ENCODE measurements at regions of chr2 and their contacts with region 1.

Region 1: DNA sequence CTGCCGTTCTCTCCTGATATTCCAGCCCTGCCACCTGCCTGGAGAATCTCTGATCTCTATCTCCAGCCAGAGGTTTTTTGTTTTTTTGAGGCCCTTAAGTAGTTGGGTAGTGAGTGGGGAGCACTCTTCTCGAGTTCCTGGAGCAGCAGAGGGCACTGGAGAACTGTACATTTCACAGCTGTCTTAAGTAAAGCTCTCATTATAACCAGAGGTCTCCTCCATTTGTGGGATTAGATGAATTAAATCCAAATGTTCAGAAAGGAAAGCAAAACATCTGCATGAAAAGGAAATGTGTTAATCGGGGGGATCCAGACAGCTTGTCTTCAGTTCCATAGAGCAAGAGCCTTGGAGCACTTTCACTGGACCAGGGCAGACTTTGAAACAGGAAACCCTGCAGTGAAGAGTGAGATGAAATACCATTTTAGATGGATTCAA is 32.8 kb downstream of the AOX1 start:
- DNase-seq: peak; percentile 78
- ATAC-seq: peak; percentile 73
- H3K4me3 ChIP-seq: no peak overlapping the region
- H3K27ac ChIP-seq: no peak overlapping the region; the same call in 1 of the 2 replicates
- H3K4me1 ChIP-seq: peaks cover 20% of the 10 kb centered on the region
- H3K27me3 ChIP-seq: no peaks in the 10 kb centered on the region
- CTCF ChIP-seq: peak; percentile 53
- POLR2A ChIP-seq: no peak
- RAD21 ChIP-seq: peak; percentile 53

Region 2: DNA sequence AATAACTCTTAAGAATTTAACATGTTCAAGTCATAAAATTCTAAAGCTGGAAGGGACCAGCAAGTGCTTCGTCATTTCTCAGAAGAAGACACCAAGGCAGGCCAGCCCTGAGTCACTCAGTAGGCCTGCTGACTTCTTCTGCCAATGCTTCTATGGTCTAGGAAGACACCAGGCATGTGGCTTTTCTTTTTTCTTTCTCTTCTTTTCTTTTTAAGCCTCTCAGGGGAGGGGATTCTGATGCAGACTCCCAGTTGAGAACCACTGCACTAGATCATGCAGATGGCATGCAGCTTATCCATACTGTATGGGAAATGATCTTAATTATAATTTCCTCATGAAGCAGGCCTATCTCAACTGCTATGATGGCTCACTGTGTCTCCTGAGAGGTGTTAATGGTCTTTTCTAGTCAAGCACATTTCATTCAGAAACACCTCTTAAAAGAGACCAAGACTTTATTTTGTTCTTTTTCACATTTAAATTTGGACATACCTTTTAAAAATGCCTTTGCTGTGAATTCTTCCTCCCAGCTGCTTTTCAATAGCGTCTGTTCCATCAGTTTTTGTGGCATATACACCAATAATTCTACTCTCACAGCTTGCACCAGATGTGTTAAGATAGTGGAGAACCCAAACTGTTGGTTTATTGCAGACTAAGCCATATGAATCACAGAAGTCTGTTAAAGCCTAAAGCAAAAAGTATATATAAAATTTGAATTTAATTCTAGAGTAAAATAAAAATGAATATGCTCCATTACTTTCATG is 120.0 kb before region 1 on chr2:
- CTCF ChIA-PET with region 1: no interaction called
- POLR2A ChIA-PET with region 1: no interaction called
- dilution Hi-C with region 1: no loop called
- in situ Hi-C with region 1: no loop called
- intact Hi-C with region 1: no loop called
- DNase-seq: no peak
- ATAC-seq: no peak
- H3K4me3 ChIP-seq: no peak overlapping the region
- H3K27ac ChIP-seq: no peak overlapping the region
- H3K4me1 ChIP-seq: no peaks in the 10 kb centered on the region
- H3K27me3 ChIP-seq: no peaks in the 10 kb centered on the region
- CTCF ChIP-seq: no peak
- POLR2A ChIP-seq: no peak
- RAD21 ChIP-seq: no peak

Region 3: GRCh38 chr2:200640176-200640575 is 21.6 kb after region 1 on chr2:
- CTCF ChIA-PET with region 1: no interaction called
- POLR2A ChIA-PET with region 1: interaction called, 16 read pairs
- dilution Hi-C with region 1: no loop called
- in situ Hi-C with region 1: no loop called
- intact Hi-C with region 1: no loop called
- DNase-seq: no peak
- ATAC-seq: no peak
- H3K4me3 ChIP-seq: no peak overlapping the region
- H3K27ac ChIP-seq: no peak overlapping the region
- H3K4me1 ChIP-seq: no peaks in the 10 kb centered on the region; the same call in 1 of the 2 replicates
- H3K27me3 ChIP-seq: no peaks in the 10 kb centered on the region
- CTCF ChIP-seq: no peak
- POLR2A ChIP-seq: no peak
- RAD21 ChIP-seq: no peak

Measured in IMR-90 (cell line).